CD4-positive, alpha-beta T cell (primary cell): ENCODE measurements at regions of chr20 and their contacts with region 1.

Region 1: GRCh38 chr20:38842558-38842981 is 37.1 kb downstream of the PPP1R16B start:
- DNase-seq: peak in 9 of 14 experiments; percentile 27 to 78 (median 46)
- ATAC-seq: peak; percentile 23
- H3K4me3 ChIP-seq: peak overlapping the region; percentile 25
- H3K4me3 Mint-ChIP-seq: peak overlapping the region; percentile 78
- H3K27ac ChIP-seq: peak overlapping the region; percentile 63 to 94
- H3K27ac Mint-ChIP-seq: peak overlapping the region; percentile 97
- H3K4me1 ChIP-seq: peaks cover 63% of the 10 kb centered on the region
- H3K4me1 Mint-ChIP-seq: peaks cover 91% of the 10 kb centered on the region
- H3K27me3 ChIP-seq: no peaks in the 10 kb centered on the region
- H3K27me3 Mint-ChIP-seq: no peaks in the 10 kb centered on the region
- CTCF ChIP-seq: no peak

Region 2: DNA sequence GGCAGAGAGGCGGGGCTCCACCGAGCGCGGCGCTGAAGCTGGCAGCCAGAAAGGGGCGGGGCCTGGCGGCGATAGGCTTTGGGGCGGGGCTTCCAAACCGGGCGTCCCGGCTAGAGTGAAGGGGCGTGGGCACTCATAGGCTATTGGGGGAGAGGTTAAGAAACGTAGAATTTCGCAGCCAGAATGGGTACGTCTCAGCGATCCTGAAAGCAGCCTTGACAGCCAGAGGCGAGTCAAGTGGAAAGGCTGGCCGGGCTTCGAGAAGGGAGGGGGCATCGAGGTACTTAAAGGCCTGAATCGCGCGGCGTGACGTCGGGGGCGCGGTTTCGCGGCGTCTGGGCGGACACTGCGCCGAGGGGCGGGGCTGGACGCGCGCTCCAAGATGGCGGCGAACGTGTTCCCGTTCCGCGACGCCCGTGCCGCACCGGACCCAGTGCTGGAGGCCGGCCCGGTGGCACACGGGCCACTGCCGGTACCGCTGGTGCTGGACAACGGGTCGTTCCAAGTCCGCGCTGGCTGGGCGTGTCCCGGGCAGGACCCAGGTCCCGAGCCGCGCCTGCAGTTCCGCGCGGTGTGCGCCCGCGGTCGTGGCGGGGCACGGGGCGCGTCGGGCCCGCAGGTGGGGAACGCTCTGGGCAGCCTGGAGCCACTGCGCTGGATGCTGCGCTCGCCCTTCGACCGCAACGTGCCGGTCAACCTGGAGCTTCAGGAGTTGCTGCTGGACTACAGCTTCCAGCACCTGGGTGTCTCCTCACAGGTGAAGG is 94.3 kb before region 1 on chr20 and contains the start of gene ACTR5:
- CTCF ChIA-PET with region 1: no interaction called
- POLR2A ChIA-PET with region 1: no interaction called
- intact Hi-C with region 1: no loop called
- DNase-seq: peak; percentile 94 to 99 (median 97)
- ATAC-seq: peak; percentile 89
- H3K4me3 ChIP-seq: peak within 1 kb of the TSS; percentile 73
- H3K4me3 Mint-ChIP-seq: peak within 1 kb of the TSS; percentile 96
- H3K27ac ChIP-seq: peak within 1 kb of the TSS; percentile 79 to 95
- H3K27ac Mint-ChIP-seq: peak within 1 kb of the TSS; percentile 95
- H3K4me1 ChIP-seq: peaks cover 16% of the 10 kb centered on the region
- H3K4me1 Mint-ChIP-seq: peaks cover 27% of the 10 kb centered on the region
- H3K27me3 ChIP-seq: no peaks in the 10 kb centered on the region
- H3K27me3 Mint-ChIP-seq: peaks cover 5% of the 10 kb centered on the region
- CTCF ChIP-seq: no peak
- total RNA-seq, gene ACTR5: 11.1 to 11.9 TPM

Region 3: GRCh38 chr20:38863024-38863851 is 20.7 kb after region 1 on chr20:
- CTCF ChIA-PET with region 1: interaction called, 5 read pairs
- POLR2A ChIA-PET with region 1: interaction called, 6 read pairs
- intact Hi-C with region 1: loop called in 1 of 2 experiments (anchors 2 kb)
- DNase-seq: peak in 8 of 14 experiments; percentile 21 to 89 (median 49)
- ATAC-seq: peak; percentile 81
- H3K4me3 ChIP-seq: peak overlapping the region; percentile 4
- H3K4me3 Mint-ChIP-seq: peak overlapping the region; percentile 43
- H3K27ac ChIP-seq: peak overlapping the region; percentile 34 to 75
- H3K27ac Mint-ChIP-seq: peak overlapping the region; percentile 81
- H3K4me1 ChIP-seq: peaks cover 67% of the 10 kb centered on the region
- H3K4me1 Mint-ChIP-seq: peaks cover 55% of the 10 kb centered on the region
- H3K27me3 ChIP-seq: no peaks in the 10 kb centered on the region
- H3K27me3 Mint-ChIP-seq: no peaks in the 10 kb centered on the region
- CTCF ChIP-seq: no peak

Region 4: GRCh38 chr20:38875175-38875993 is 32.8 kb after region 1 on chr20:
- CTCF ChIA-PET with region 1: interaction called, 8 read pairs
- POLR2A ChIA-PET with region 1: interaction called, 77 read pairs
- intact Hi-C with region 1: loop called in 1 of 2 experiments (anchors 2 kb)
- DNase-seq: peak; percentile 45 to 89 (median 62)
- ATAC-seq: peak; percentile 51
- H3K4me3 ChIP-seq: peak overlapping the region; percentile 40
- H3K4me3 Mint-ChIP-seq: peak overlapping the region; percentile 84
- H3K27ac ChIP-seq: peak overlapping the region; percentile 76 to 89
- H3K27ac Mint-ChIP-seq: peak overlapping the region; percentile 89
- H3K4me1 ChIP-seq: peaks cover 70% of the 10 kb centered on the region
- H3K4me1 Mint-ChIP-seq: peaks cover 98% of the 10 kb centered on the region
- H3K27me3 ChIP-seq: no peaks in the 10 kb centered on the region
- H3K27me3 Mint-ChIP-seq: no peaks in the 10 kb centered on the region
- CTCF ChIP-seq: no peak